ENCODE measurements at regions of chr10 and their contacts with region 1.

Region 1: DNA sequence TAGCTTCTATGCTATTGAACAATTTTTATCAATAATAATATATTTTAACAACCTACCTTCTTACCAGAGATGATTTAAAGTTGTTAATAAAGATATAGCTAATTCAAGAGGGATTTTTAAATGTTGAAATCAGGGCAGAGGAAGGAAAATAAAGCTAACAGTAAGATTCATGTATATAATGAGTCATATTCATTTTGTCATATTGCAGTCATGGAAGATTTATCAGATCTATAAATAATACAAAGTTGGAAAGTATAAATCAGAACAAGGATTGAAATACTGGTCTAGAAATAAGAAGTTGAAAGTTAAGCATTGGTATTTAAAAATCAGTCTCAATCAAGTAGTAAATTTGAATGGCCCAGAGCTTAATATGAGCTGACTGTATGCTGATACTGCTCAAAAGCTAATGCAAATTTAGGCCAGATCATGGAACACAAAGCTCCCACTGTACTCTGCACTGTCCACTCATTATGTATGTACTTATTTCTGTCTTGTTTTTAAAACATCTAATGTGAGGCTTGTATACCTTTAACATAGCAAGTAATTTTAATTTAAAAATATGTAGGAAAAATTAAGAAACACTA is 196.9 kb downstream of the ZEB1 start:
- DNase-seq: no peak
- H3K4me3 Mint-ChIP-seq: no peak overlapping the region
- H3K27ac Mint-ChIP-seq: no peak overlapping the region
- H3K4me1 Mint-ChIP-seq: peaks cover 3% of the 10 kb centered on the region
- H3K27me3 Mint-ChIP-seq: no peaks in the 10 kb centered on the region

Region 2: DNA sequence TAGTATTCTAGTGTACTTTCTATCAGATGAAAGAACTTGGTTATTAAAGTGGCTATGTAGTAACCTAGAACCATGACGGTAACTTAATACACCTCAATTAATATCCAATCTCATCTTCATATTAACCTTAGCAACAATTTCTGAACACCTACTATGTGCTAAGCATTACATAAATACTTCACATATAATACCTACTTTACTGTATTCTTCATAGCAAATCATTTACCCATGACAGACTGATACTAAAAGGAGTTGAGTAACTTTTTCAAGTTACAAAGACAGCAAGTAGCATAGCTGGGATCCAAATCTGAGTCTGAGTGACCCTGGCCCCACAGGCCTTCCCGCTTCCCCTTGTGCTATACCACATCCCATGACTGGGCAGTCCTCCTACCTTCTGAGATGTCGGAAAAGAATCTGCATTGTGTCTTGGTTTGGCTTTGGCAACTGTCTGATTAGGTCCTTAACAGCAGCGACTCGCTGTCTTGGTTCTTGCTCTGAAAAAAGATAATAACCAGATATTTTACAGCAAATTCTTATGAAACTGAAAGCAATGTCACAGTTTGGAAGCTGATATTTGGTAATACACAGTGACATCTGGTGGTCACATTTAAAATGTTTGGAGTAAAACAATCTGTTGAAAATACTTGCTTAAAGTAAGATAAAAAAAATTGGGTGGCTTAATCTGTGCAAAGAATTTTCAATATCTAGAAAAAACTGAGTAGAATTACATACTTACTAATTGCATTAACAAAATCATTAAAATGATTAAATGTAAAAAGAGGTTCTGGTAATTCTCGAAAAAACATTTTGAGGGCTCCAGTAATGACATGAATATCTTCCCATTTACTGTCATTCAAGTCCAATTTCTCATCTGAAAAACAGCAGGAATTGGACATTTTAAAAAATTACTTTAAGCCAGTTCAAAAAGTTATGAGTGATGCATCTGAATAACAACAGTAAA is 292.6 kb after region 1 on chr10:
- intact Hi-C with region 1: loop called (anchors 10 kb)
- DNase-seq: peak; percentile 71
- H3K4me3 Mint-ChIP-seq: peak overlapping the region; percentile 72
- H3K27ac Mint-ChIP-seq: peak overlapping the region; percentile 81
- H3K4me1 Mint-ChIP-seq: peaks cover 6% of the 10 kb centered on the region
- H3K27me3 Mint-ChIP-seq: no peaks in the 10 kb centered on the region

Measured in activated CD4-positive, alpha-beta T cell treated with anti-CD3 and anti-CD28 coated beads, Interleukin-2, amount 10 ng/mL, durations not matched to agents 24 days and 14 days (primary cell).